ENCODE measurements at regions of chr7 and their contacts with region 1.

Region 1: GRCh38 chr7:116271963-116272839 is 61.9 kb downstream of the TES start:
- DNase-seq: peak; percentile 98
- ATAC-seq: peak; percentile 89
- H3K4me3 ChIP-seq: peak overlapping the region; percentile 36; the same call in 1 of the 2 replicates
- H3K27ac ChIP-seq: peak overlapping the region; percentile 90
- H3K4me1 ChIP-seq: peaks cover 16% of the 10 kb centered on the region
- H3K27me3 ChIP-seq: no peaks in the 10 kb centered on the region
- CTCF ChIP-seq: no peak
- POLR2A ChIP-seq: no peak
- RAD21 ChIP-seq: peak; percentile 11

Region 2: GRCh38 chr7:116298055-116298454 is 25.9 kb after region 1 on chr7:
- CTCF ChIA-PET with region 1: no interaction called
- POLR2A ChIA-PET with region 1: no interaction called
- dilution Hi-C with region 1: no loop called
- in situ Hi-C with region 1: no loop called
- intact Hi-C with region 1: no loop called
- DNase-seq: no peak
- ATAC-seq: no peak
- H3K4me3 ChIP-seq: no peak overlapping the region
- H3K27ac ChIP-seq: no peak overlapping the region
- H3K4me1 ChIP-seq: no peaks in the 10 kb centered on the region
- H3K27me3 ChIP-seq: no peaks in the 10 kb centered on the region
- CTCF ChIP-seq: no peak
- POLR2A ChIP-seq: no peak
- RAD21 ChIP-seq: no peak

Region 3: GRCh38 chr7:116316833-116317612 is 44.8 kb after region 1 on chr7:
- CTCF ChIA-PET with region 1: interaction called, 3 read pairs
- POLR2A ChIA-PET with region 1: no interaction called
- dilution Hi-C with region 1: no loop called
- in situ Hi-C with region 1: no loop called
- intact Hi-C with region 1: loop called (anchors 2 kb)
- DNase-seq: peak; percentile 99
- ATAC-seq: peak; percentile 86
- H3K4me3 ChIP-seq: no peak overlapping the region
- H3K27ac ChIP-seq: peak overlapping the region; percentile 62
- H3K4me1 ChIP-seq: peaks cover 11% of the 10 kb centered on the region
- H3K27me3 ChIP-seq: no peaks in the 10 kb centered on the region
- CTCF ChIP-seq: no peak
- POLR2A ChIP-seq: peak; percentile 41; the same call in 1 of the 2 replicates
- RAD21 ChIP-seq: 0 out of 2 replicates have a peak, but pooled peaks have one; percentile 17

Region 4: GRCh38 chr7:116395125-116395791 is 123.1 kb after region 1 on chr7:
- CTCF ChIA-PET with region 1: no interaction called
- POLR2A ChIA-PET with region 1: no interaction called
- dilution Hi-C with region 1: no loop called
- in situ Hi-C with region 1: no loop called
- intact Hi-C with region 1: loop called (anchors 2 kb)
- DNase-seq: peak; percentile 94
- ATAC-seq: peak; percentile 97
- H3K4me3 ChIP-seq: no peak overlapping the region; the same call in 1 of the 2 replicates
- H3K27ac ChIP-seq: peak overlapping the region; percentile 30; the same call in 1 of the 2 replicates
- H3K4me1 ChIP-seq: peaks cover 7% of the 10 kb centered on the region
- H3K27me3 ChIP-seq: no peaks in the 10 kb centered on the region
- CTCF ChIP-seq: no peak
- POLR2A ChIP-seq: no peak
- RAD21 ChIP-seq: peak; percentile 24

Region 5: DNA sequence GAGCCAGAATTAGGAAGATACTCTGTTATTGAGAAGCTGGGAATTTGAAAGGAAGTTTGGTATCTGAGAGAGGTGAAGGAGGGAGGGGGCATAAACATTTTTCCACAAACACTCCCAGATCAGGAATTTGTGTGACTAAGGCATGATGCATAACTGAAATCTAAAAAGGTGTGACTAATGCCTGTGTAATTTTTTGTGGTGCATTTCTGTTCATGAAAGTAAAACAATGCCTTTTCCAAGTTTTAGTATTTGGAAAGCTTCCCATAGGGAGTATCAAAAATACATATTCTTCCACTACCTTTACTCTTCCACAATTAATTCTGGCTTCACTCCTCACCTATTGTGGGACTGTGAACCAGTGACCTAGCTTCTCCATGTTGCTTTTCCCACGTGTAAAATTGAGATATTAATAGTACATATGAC is 170.9 kb after region 1 on chr7:
- CTCF ChIA-PET with region 1: no interaction called
- POLR2A ChIA-PET with region 1: no interaction called
- dilution Hi-C with region 1: no loop called
- in situ Hi-C with region 1: no loop called
- intact Hi-C with region 1: loop called (anchors 5 kb)
- DNase-seq: peak; percentile 97
- ATAC-seq: peak; percentile 76
- H3K4me3 ChIP-seq: no peak overlapping the region
- H3K27ac ChIP-seq: 0 out of 2 replicates have a peak overlapping the region, but pooled peaks have one; percentile 87
- H3K4me1 ChIP-seq: peaks cover 14% of the 10 kb centered on the region
- H3K27me3 ChIP-seq: no peaks in the 10 kb centered on the region
- CTCF ChIP-seq: no peak
- POLR2A ChIP-seq: no peak
- RAD21 ChIP-seq: no peak

Region 6: GRCh38 chr7:116499168-116500077 is 227.2 kb after region 1 on chr7 and contains the start of gene CAV2:
- CTCF ChIA-PET with region 1: no interaction called
- POLR2A ChIA-PET with region 1: interaction called, 6 read pairs
- dilution Hi-C with region 1: loop called (anchors 25 kb)
- in situ Hi-C with region 1: no loop called
- intact Hi-C with region 1: loop called (anchors 2 kb)
- DNase-seq: peak; percentile 48
- ATAC-seq: peak; percentile 91
- H3K4me3 ChIP-seq: peak within 1 kb of the TSS; percentile 88
- H3K27ac ChIP-seq: peak within 1 kb of the TSS; percentile 94
- H3K4me1 ChIP-seq: peaks cover 15% of the 10 kb centered on the region
- H3K27me3 ChIP-seq: no peaks in the 10 kb centered on the region
- CTCF ChIP-seq: no peak
- POLR2A ChIP-seq: no peak; the same call in 1 of the 2 replicates
- RAD21 ChIP-seq: no peak
- total RNA-seq, gene CAV2: 199 and 217 TPM in 2 replicates

Measured in IMR-90 (cell line).